K562 (cell line): ENCODE measurements at regions of chr5 and their contacts with region 1.

Region 1: GRCh38 chr5:140284013-140284412 is 18.9 kb downstream of the PFDN1 start:
- DNase-seq: no peak
- ATAC-seq: no peak
- H3K4me3 ChIP-seq: no peak overlapping the region
- H3K27ac ChIP-seq: no peak overlapping the region
- H3K4me1 ChIP-seq: 0 out of 5 replicates have a peak, but pooled peaks cover 0 to 3% of the 10 kb centered on the region in 2 experiments
- H3K27me3 ChIP-seq: no peaks in the 10 kb centered on the region
- CTCF ChIP-seq: no peak
- EP300 ChIP-seq: no peak
- POLR2A ChIP-seq: no peak
- RAD21 ChIP-seq: no peak

Region 2: GRCh38 chr5:140295414-140295813 is 11.4 kb after region 1 on chr5:
- CTCF ChIA-PET with region 1: no interaction called
- POLR2A ChIA-PET with region 1: interaction called, 10 read pairs
- in situ Hi-C with region 1: no loop called
- intact Hi-C with region 1: no loop called
- DNase-seq: peak in 1 of 4 experiments; percentile 71
- ATAC-seq: peak; percentile 73
- H3K4me3 ChIP-seq: no peak overlapping the region
- H3K27ac ChIP-seq: no peak overlapping the region
- H3K4me1 ChIP-seq: peaks cover 0 to 9% of the 10 kb centered on the region in 2 experiments; a peak in 3 of 5 replicates
- H3K27me3 ChIP-seq: no peaks in the 10 kb centered on the region
- CTCF ChIP-seq: no peak
- EP300 ChIP-seq: no peak
- POLR2A ChIP-seq: no peak
- RAD21 ChIP-seq: peak in 1 of 2 experiments; percentile 20; a peak in 1 of 4 replicates

Region 3: DNA sequence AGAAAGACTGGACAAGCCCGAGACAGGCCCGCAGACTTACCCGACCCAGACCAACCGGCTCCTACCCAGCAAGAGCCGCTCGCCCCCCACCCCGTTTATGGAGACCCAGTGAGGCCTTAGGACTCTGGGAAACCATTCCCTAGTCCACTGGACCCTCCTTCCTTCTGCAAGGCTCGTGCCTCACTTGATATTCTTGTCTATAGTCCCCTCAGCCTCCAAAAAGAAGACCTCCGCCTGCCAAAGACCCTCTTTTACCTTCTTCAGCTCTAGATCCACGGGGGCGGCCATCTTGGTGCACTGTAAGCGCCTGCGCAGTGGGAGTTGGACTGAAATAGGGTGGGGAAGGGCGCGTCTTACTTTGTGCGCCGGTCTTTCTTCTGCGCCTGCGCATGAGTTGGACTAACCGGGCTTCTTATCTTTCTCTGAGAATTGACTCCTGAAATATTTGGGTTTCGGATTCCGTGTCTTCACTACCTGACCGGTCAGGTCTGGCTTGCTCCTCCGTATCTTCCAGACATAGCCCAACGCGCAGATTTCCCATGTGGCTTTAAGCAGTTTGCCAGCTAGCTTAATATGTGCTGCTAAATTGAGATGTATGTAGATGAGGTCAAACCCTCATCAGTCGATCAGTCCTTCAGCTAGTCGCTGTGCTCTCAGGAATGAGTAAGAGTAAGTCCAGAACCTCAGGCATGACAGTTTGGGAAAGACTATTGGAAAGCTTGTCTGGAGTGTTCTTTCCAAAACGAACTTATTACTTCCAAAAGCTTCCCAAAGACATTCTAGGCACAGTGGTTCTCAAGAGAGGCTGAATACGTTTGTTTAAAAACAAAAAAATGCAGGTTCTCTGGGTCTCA is 19.0 kb after region 1 on chr5 and contains the start of gene PFDN1:
- CTCF ChIA-PET with region 1: no interaction called
- POLR2A ChIA-PET with region 1: interaction called, 11 read pairs
- in situ Hi-C with region 1: no loop called
- intact Hi-C with region 1: no loop called
- DNase-seq: peak; percentile 97 to 98 (median 98)
- ATAC-seq: peak; percentile 97
- H3K4me3 ChIP-seq: peak within 1 kb of the TSS; percentile 87
- H3K27ac ChIP-seq: peak within 1 kb of the TSS; percentile 91
- H3K4me1 ChIP-seq: peaks cover 4% of the 10 kb centered on the region in 2 experiments; a peak in 3 of 5 replicates
- H3K27me3 ChIP-seq: no peaks in the 10 kb centered on the region
- CTCF ChIP-seq: no peak
- EP300 ChIP-seq: no peak
- POLR2A ChIP-seq: peak; percentile 90
- RAD21 ChIP-seq: no peak
- polyA plus RNA-seq, gene PFDN1: 152 to 215 TPM